Calu3 (cell line): ENCODE measurements at regions of chr11 and their contacts with region 1.

Region 1: DNA sequence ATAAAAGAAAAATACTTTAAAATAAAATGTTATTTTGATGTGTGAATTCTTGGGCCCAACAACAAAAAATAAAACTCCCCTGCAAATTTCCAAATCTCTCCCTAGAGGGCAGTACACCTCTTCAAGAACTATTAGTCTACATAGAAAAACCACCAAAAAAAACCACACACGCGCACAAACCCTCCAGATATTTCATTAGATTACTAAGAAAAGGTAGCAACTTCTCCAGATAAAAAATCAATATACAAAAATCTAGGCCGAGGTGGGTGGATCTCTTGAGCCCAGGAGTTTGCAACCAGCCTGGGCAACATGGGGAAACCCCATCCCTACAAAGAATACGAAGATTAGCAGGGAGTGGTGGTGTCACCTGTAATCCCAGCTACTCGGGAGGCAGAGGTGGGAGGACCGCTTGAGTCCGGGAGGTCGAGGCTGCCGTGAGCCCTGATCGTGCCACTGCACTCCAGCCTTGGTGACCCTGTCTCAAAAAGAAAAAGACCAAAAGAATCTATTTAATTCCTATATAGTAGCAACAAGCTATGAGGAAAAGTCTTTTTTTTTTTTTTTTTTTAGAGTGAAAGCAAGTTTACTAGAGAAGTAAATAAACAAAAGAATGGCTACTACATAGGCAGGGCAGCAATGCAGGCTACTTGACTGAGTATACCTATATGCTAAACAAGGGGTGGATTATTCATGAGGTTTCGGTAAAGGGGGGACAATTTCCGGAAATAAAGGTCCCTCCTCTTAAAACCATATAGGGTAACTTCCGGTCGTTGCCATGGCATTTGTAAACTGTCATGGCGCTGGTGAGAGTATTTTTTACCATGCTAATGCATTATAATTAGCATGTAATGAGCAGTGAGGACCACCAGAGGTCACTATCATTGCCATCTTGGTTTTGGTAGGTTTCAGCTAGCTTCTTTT is 13.1 kb downstream of the B3GNT6 start:
- DNase-seq: peak; percentile 81
- H3K4me3 Mint-ChIP-seq: peak overlapping the region; percentile 62
- H3K27ac Mint-ChIP-seq: peak overlapping the region; percentile 57
- H3K4me1 Mint-ChIP-seq: peaks cover 11% of the 10 kb centered on the region
- H3K27me3 Mint-ChIP-seq: no peaks in the 10 kb centered on the region
- CTCF ChIP-seq: peak; percentile 57

Region 2: DNA sequence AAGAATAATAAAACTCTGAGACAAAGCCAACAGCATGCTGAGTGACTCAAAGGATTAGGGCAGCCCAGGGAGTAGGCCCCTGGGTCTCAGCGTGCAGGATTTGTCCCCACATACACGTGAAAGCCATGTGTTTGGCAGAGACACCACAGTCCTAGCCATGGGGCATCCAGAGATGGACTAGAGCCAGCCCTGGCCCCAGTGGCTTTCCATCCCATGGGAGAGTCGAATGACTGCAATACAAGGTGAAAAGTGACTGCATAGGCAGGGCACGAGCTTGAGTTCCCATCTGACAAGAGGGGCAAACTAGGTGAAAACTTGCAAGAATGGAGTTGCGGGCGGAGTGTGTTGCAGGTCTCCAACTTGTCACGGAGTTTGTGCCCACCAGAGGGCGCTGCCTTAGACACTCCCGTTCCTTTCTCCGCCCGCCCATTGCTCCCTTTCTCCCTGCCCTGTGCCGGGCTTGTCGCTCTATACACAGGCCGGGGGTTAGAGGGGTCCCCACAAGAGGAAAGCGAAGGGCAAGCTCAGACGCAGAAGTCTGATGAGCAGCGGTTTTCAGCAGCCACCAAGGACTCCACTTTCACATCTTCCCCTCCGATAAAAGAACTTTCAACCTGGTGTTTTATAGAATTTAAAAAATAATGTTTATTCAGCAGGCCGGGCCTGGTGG is 239.9 kb before region 1 on chr11:
- CTCF ChIA-PET with region 1: no interaction called
- intact Hi-C with region 1: loop called (anchors 2 kb)
- DNase-seq: peak; percentile 90
- H3K4me3 Mint-ChIP-seq: no peak overlapping the region
- H3K27ac Mint-ChIP-seq: peak overlapping the region; percentile 17
- H3K4me1 Mint-ChIP-seq: peaks cover 19% of the 10 kb centered on the region
- H3K27me3 Mint-ChIP-seq: no peaks in the 10 kb centered on the region
- CTCF ChIP-seq: peak; percentile 87

Region 3: DNA sequence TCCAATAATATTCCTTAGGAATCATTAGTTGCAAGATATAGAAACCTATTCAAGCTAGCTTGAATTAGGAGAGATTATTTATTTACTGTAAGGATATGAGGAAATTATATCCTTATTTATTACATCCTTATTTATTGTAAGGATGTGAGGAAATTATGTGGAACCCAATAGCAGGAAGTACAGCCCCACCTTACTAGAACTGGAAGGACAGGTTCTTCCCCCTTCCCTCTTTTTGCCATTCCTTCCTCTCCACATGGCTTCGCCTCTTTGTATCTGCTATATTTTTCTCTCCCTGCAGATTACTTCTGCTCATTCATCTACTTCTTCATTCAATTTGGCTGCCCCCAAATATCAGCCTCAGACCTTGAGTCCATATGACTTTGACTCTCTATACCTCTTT is 62.5 kb before region 1 on chr11:
- CTCF ChIA-PET with region 1: no interaction called
- intact Hi-C with region 1: no loop called
- DNase-seq: peak; percentile 31
- H3K4me3 Mint-ChIP-seq: peak overlapping the region; percentile 4
- H3K27ac Mint-ChIP-seq: peak overlapping the region; percentile 53
- H3K4me1 Mint-ChIP-seq: peaks cover 20% of the 10 kb centered on the region
- H3K27me3 Mint-ChIP-seq: no peaks in the 10 kb centered on the region
- CTCF ChIP-seq: no peak

Region 4: DNA sequence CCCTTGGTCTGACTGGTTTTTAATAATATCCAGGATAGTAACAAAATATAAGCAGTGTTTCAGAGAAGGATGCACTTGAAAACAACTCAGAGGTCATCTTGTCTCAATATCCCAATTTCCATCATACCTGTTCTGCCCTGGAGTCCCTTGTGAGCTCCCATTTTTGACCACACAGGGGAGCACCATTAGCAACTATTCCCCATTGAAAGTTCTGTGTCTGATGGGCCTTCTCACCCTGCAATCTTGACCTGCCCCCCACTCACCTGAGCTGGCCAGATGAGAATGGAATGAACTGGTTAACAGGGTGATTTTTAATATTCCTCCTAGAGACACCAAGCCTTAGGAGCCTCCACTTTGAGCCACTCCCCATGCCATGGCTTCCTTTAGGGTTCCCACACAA is 15.7 kb after region 1 on chr11:
- CTCF ChIA-PET with region 1: interaction called, 14 read pairs
- intact Hi-C with region 1: no loop called
- DNase-seq: peak; percentile 32
- H3K4me3 Mint-ChIP-seq: no peak overlapping the region
- H3K27ac Mint-ChIP-seq: peak overlapping the region; percentile 36
- H3K4me1 Mint-ChIP-seq: peaks cover 50% of the 10 kb centered on the region
- H3K27me3 Mint-ChIP-seq: no peaks in the 10 kb centered on the region
- CTCF ChIP-seq: no peak

Region 5: GRCh38 chr11:77091146-77091940 is 44.1 kb after region 1 on chr11:
- CTCF ChIA-PET with region 1: interaction called, 97 read pairs
- intact Hi-C with region 1: loop called (anchors 1 kb)
- DNase-seq: peak; percentile 89
- H3K4me3 Mint-ChIP-seq: no peak overlapping the region
- H3K27ac Mint-ChIP-seq: no peak overlapping the region
- H3K4me1 Mint-ChIP-seq: peaks cover 56% of the 10 kb centered on the region
- H3K27me3 Mint-ChIP-seq: no peaks in the 10 kb centered on the region
- CTCF ChIP-seq: peak; percentile 95

Region 6: GRCh38 chr11:77113382-77114088 is 66.3 kb after region 1 on chr11:
- CTCF ChIA-PET with region 1: interaction called, 17 read pairs
- intact Hi-C with region 1: loop called (anchors 1 kb)
- DNase-seq: peak; percentile 76
- H3K4me3 Mint-ChIP-seq: no peak overlapping the region
- H3K27ac Mint-ChIP-seq: no peak overlapping the region
- H3K4me1 Mint-ChIP-seq: peaks cover 16% of the 10 kb centered on the region
- H3K27me3 Mint-ChIP-seq: no peaks in the 10 kb centered on the region
- CTCF ChIP-seq: peak; percentile 78

Region 7: DNA sequence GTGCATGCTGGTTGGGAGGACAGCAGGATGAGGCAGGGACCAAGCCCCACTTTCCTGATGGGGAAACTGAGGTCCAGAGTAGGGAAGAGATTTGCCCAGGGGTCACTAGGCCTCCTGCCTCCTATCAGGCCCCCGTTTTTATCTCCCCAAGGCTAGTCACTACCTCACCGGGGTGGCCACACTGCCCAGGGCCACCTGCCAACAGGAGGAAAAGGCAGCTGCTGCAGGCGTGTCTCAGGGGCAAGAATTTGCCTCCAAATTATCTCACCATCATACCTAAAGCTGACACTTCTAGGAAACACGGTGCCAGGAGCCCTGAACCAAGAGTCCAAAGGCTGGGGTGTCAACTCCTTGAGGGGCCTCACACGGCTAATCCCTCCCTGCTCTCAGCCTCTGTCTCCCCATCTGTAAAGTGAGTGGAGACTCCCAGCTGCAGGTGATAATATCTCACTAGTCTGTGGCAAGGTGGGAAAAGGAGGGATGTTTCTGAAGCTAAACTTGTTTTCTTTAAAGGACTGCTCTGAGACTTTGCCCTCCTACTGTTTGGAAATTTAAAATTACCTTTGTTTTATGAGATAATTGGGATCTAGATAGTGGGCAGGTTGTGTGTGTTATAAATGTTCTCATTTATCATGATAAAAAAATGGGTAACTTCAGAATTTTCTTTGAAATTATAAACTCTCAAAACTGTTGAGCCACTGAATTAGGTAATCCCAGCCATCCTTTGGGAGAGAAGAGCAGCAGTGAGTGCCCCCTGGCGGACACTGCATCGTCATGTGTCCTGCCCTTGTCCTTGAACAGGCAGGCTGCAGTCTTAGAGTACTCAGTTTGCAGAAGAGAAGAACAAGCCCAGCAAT is 140.7 kb after region 1 on chr11:
- CTCF ChIA-PET with region 1: interaction called, 5 read pairs
- intact Hi-C with region 1: loop called (anchors 1 kb)
- DNase-seq: peak; percentile 85
- H3K4me3 Mint-ChIP-seq: no peak overlapping the region
- H3K27ac Mint-ChIP-seq: no peak overlapping the region
- H3K4me1 Mint-ChIP-seq: no peaks in the 10 kb centered on the region
- H3K27me3 Mint-ChIP-seq: peaks cover 21% of the 10 kb centered on the region
- CTCF ChIP-seq: peak; percentile 69

Region 8: DNA sequence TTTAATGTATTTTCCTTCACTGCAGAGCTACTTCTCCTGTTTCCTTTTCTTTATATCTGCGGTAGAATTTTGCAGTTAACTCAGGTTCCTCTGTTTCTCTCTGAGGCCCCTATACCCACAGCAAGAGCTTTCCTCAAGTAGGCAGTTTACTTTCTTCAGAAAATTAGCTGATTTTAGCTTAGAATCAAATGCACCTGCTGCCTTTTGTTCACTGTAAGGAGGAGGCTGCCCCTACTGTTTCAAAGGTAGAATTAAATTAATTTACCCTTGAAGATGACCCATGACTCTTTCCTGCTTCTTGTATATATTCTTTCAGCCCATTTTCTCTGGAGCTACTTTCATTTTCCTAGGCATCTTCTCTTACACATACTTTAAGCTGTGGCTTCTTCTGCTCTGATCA is 323.0 kb after region 1 on chr11:
- CTCF ChIA-PET with region 1: no interaction called
- intact Hi-C with region 1: no loop called
- DNase-seq: no peak
- H3K4me3 Mint-ChIP-seq: no peak overlapping the region
- H3K27ac Mint-ChIP-seq: no peak overlapping the region
- H3K4me1 Mint-ChIP-seq: peaks cover 5% of the 10 kb centered on the region
- H3K27me3 Mint-ChIP-seq: no peaks in the 10 kb centered on the region
- CTCF ChIP-seq: no peak

Region 9: DNA sequence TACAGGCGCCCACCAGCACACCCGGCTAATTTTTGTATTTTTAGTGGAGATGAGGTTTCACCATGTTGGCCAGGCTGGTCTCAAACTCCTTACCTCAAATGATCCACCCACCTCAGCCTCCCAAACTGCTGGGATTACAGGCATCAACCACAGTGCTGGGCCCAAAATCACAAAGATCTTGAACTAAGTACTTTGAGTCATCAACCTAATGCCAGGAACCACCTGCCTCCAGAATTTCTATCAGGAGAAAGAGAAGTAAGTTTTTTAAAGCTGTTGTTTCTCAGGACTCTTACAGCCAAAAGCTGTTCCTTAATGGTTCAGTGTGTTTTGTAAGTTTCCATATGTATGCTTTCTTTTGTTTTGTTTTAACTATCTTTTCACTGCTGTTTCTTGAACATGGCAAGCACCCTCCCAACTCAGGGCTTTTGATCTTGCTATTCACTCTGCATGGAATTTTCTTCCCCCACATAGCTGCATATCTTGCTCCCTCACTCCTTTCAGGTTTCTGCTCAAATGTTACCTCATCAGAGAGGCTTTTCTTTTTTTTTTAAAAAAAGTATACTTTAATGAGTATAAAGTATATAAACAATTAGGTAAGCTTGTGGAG is 432.6 kb after region 1 on chr11:
- CTCF ChIA-PET with region 1: no interaction called
- intact Hi-C with region 1: no loop called
- DNase-seq: no peak
- H3K4me3 Mint-ChIP-seq: no peak overlapping the region
- H3K27ac Mint-ChIP-seq: no peak overlapping the region
- H3K4me1 Mint-ChIP-seq: peaks cover 7% of the 10 kb centered on the region
- H3K27me3 Mint-ChIP-seq: no peaks in the 10 kb centered on the region
- CTCF ChIP-seq: no peak

Region 10: GRCh38 chr11:77725433-77725832 is 678.2 kb after region 1 on chr11:
- CTCF ChIA-PET with region 1: no interaction called
- intact Hi-C with region 1: no loop called
- DNase-seq: no peak
- H3K4me3 Mint-ChIP-seq: no peak overlapping the region
- H3K27ac Mint-ChIP-seq: no peak overlapping the region
- H3K4me1 Mint-ChIP-seq: no peaks in the 10 kb centered on the region
- H3K27me3 Mint-ChIP-seq: no peaks in the 10 kb centered on the region
- CTCF ChIP-seq: no peak